PC-3 (cell line): ENCODE measurements at regions of chr11 and their contacts with region 1.

Region 1: DNA sequence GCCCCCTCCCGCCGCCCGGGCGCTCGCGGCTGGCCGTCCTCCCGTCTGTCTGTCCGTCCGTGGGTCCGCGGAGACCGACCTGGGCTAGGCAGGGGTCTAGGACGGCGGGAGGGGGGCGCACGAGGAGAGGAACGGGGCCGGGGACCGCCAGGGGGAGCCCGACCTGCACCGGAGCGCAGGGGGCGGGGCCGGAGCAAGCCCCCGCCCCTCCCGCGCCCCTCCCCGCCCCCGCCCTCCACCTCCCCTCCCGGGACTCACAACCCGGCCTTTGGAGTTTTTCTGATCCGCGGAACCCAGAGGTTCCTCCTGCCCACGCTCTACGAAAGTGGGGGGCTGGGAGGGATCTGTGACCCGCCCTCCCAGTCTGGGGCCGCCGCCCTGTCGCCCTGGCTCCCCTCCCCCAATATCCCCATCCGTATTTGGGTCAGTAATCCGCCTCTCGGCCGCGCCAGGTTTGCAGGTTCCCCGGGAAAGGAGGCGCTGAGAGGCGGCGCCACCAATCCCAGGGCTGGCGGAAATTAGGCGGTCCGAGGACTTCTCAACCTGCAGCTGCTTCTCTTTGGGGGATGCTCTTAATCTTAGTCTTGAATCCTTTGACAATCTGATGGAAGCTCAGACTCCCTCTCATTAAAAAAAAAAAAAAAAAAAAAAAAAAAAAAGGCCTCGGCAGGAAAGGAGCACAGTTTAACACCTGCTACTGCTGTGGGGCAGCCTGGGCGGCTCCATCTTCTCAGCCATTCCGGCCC is 925 bp upstream of the KCNJ11 start:
- DNase-seq: peak; percentile 56
- ATAC-seq: peak; percentile 68
- H3K4me3 ChIP-seq: peak overlapping the region; percentile 74
- H3K27ac ChIP-seq: no peak overlapping the region
- H3K4me1 ChIP-seq: peaks cover 2% of the 10 kb centered on the region; the same call in 1 of the 2 replicates
- H3K27me3 ChIP-seq: no peaks in the 10 kb centered on the region
- CTCF ChIP-seq: peak; percentile 47

Region 2: DNA sequence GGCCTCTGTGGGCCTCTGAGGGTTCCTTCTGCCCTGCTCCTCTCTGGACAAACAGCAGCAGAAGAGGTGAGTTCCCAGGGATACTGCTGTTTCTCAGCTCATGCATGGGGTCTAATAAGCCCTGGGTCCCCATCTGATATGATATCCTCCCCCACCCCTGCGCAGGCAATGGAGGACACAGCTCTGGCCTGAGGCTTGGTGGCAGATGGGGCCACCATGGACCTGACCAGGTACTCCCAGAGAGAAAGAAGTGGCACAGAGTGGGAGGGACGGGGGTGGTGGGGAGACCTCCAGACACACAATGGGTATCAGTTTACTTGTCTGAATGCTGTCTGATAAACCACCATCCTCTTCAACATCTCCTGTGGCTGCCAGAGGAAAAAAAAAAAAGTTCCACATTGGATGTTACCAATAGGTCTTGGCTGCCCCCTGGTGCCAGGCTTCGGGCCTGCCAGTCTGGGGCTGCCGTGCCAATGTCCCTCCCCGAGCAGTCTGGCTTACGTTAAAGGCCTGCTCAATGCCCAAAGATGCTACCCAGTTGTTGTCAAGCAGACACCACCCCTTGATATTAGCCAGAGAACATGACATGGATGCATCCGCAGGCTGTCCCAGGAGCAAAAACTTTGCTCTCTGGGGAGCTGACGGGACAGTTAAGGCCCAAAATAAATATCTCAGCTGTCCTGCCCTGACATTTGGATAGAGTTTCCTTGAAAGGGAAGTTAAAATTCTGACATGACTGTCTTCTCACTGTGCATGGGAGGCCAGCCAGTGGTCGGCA is 115.1 kb after region 1 on chr11:
- CTCF ChIA-PET with region 1: no interaction called
- POLR2A ChIA-PET with region 1: no interaction called
- intact Hi-C with region 1: loop called (anchors 1 kb)
- DNase-seq: peak; percentile 74
- ATAC-seq: peak; percentile 88
- H3K4me3 ChIP-seq: no peak overlapping the region
- H3K27ac ChIP-seq: no peak overlapping the region
- H3K4me1 ChIP-seq: no peaks in the 10 kb centered on the region
- H3K27me3 ChIP-seq: peaks cover 10% of the 10 kb centered on the region; the same call in 1 of the 2 replicates
- CTCF ChIP-seq: peak; percentile 84